BJ (cell line): ENCODE measurements at regions of chr22 and their contacts with region 1.

Region 1: GRCh38 chr22:36180038-36180880 is 19.7 kb upstream of the APOL3 start:
- DNase-seq: no peak
- H3K4me3 ChIP-seq: no peak overlapping the region
- H3K27me3 ChIP-seq: peaks cover 1% of the 10 kb centered on the region; the same call in 1 of the 2 replicates
- CTCF ChIP-seq: peak; percentile 93

Region 2: GRCh38 chr22:36136475-36136874 is 43.8 kb before region 1 on chr22:
- CTCF ChIA-PET with region 1: interaction called, 166 read pairs
- POLR2A ChIA-PET with region 1: no interaction called
- DNase-seq: no peak
- H3K4me3 ChIP-seq: no peak overlapping the region
- H3K27me3 ChIP-seq: peaks cover 14% of the 10 kb centered on the region
- CTCF ChIP-seq: no peak

Region 3: DNA sequence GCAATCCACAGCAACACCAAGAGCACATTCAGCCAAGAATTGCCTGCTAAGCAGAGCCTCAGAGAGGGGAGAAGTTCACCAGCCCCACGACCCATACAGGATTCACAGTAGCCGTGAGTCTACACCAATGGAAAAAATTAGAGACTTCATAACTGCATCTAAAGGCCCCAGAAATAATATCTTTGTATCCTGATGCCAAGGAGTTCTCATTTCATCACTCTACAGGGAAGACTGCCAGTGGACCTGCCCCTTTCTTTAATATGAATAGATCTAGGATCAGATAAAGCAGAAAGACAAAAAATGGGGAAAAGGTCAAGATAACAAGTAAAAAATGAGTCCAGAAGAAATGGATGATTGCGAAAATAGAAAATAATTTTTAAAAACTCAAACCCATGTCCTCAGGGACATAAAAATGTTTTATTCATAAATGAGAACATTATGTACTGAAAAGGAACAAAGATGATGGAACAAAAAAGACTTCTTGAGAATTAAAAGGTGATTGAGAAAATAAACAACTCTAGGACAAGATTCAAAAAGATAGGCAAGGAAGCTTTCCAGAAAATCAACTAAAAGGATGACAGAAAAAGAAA is 29.2 kb before region 1 on chr22:
- CTCF ChIA-PET with region 1: interaction called, 166 read pairs
- POLR2A ChIA-PET with region 1: no interaction called
- DNase-seq: no peak
- H3K4me3 ChIP-seq: no peak overlapping the region
- H3K27me3 ChIP-seq: no peaks in the 10 kb centered on the region
- CTCF ChIP-seq: no peak

Region 4: DNA sequence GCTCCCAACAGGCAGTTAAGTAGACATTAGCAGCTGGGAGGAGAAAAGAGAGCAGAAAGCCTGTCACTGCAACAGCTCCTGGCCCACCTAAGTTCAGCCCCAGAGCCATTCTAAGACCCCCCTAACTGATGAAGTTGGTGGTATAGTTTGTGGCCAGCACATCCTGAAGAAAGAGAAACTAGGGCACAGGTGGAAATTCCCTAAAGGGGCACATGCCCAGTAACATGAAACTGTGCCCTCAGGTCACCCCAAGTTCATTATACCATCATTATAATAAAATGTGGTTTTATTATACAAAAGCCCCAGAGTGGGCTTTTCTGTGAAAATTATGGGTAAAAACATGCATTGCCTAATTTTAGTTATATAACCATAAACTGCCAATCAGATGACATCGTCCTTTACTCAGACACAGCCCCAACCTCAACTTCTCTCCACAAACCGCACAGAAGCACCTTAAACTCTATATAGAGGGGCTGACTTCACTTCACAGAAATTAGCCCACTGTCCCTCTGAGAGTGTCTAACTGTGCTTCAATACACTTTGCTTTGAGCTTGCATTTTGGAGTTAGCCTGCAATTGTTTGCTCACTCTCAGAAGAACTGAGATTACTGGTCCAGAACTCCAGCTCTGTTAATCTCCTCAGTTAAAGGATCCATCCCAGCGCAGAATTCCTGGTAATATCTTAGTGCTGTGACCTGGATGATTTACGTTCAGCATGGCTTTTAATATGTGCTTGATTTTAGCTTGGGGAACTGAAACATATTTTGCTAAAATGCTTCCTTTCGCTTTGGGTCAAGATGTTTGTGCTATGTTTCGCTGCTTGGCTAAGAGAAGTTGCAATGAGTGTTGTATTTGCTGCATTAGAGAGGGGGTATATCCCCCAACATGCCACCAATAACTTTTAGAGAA is 17.9 kb before region 1 on chr22:
- CTCF ChIA-PET with region 1: interaction called, 39 read pairs
- POLR2A ChIA-PET with region 1: no interaction called
- DNase-seq: no peak
- H3K4me3 ChIP-seq: no peak overlapping the region
- H3K27me3 ChIP-seq: no peaks in the 10 kb centered on the region; the same call in 1 of the 2 replicates
- CTCF ChIP-seq: no peak

Region 5: DNA sequence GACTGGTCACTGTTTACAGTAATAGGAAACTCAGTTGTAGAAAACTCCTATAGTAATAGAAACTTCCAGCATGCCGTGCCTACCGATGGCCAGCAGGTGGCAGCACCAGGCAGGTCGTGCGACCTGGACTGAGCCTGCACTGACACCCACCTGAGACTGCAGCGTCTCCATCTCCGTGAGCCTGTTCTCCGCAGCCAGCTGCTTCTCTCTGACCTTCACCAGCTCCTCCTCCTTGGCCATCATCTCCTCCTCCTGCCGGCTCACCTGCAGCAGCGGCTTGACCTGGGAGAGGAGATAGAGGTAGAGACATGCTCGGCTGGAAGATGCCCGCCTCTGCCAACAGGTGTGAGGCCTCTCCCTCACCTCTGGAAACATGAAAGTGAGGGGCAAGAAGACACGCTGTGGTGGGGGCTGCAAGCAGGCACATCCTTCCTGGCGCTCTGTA is 121.1 kb after region 1 on chr22:
- CTCF ChIA-PET with region 1: no interaction called
- POLR2A ChIA-PET with region 1: no interaction called
- DNase-seq: no peak
- H3K4me3 ChIP-seq: no peak overlapping the region
- H3K27me3 ChIP-seq: no peaks in the 10 kb centered on the region
- CTCF ChIP-seq: peak; percentile 90